ENCODE measurements at regions of chr4 and their contacts with region 1.

Region 1: GRCh38 chr4:37603070-37603468 is 83.1 kb downstream of the RELL1 start:
- DNase-seq: peak; percentile 56 to 87 (median 72)
- ATAC-seq: peak; percentile 74
- H3K4me3 ChIP-seq: no peak overlapping the region
- H3K4me3 Mint-ChIP-seq: no peak overlapping the region
- H3K27ac ChIP-seq: no peak overlapping the region
- H3K27ac Mint-ChIP-seq: no peak overlapping the region
- H3K4me1 ChIP-seq: peaks cover 8% of the 10 kb centered on the region
- H3K4me1 Mint-ChIP-seq: peaks cover 5% of the 10 kb centered on the region
- H3K27me3 ChIP-seq: no peaks in the 10 kb centered on the region
- H3K27me3 Mint-ChIP-seq: no peaks in the 10 kb centered on the region
- CTCF ChIP-seq: peak; percentile 98

Region 2: GRCh38 chr4:37615059-37615719 is 12.1 kb after region 1 on chr4:
- CTCF ChIA-PET with region 1: interaction called, 10 read pairs
- POLR2A ChIA-PET with region 1: no interaction called
- intact Hi-C with region 1: no loop called
- DNase-seq: no peak
- ATAC-seq: no peak
- H3K4me3 ChIP-seq: no peak overlapping the region
- H3K4me3 Mint-ChIP-seq: no peak overlapping the region
- H3K27ac ChIP-seq: no peak overlapping the region
- H3K27ac Mint-ChIP-seq: no peak overlapping the region
- H3K4me1 ChIP-seq: no peaks in the 10 kb centered on the region
- H3K4me1 Mint-ChIP-seq: peaks cover 6% of the 10 kb centered on the region
- H3K27me3 ChIP-seq: no peaks in the 10 kb centered on the region
- H3K27me3 Mint-ChIP-seq: no peaks in the 10 kb centered on the region
- CTCF ChIP-seq: no peak

Region 3: DNA sequence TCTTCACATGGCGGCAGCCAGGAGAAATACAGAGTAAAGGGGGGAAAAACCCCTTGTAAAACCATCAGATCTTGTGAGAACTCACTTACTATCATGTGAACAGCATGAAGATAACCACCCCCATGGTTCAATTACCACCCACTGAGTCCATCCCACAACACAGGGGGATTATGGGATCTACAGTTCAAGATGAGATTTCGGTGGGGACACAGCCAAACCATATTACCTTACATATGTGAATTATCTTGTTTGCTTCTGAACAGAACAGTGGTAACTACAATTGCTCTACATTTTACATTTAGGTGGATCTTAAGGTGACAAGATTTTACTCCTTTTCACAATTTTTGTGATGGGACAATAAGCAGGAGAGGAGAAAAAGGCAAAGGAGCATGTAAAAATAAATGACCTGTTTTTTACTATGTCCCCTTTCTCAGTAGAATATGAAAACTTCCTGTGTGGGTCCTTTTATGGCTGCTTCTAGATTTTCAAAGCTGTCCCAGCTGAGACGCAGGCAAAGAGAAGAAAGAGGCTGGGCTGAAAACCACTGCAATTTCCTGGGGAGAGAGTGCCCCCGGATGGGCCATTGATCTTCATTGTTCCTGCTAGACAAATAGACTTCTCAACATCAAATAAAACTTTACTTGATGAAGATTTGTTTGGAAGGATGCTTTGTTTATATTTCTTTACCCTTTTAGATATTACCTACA is 177.5 kb after region 1 on chr4:
- CTCF ChIA-PET with region 1: interaction called, 104 read pairs
- POLR2A ChIA-PET with region 1: no interaction called
- intact Hi-C with region 1: loop called (anchors 1 kb)
- DNase-seq: peak; percentile 36 to 85 (median 61)
- ATAC-seq: peak; percentile 96
- H3K4me3 ChIP-seq: no peak overlapping the region
- H3K4me3 Mint-ChIP-seq: peak overlapping the region; percentile 13
- H3K27ac ChIP-seq: peak overlapping the region; percentile 18 to 47
- H3K27ac Mint-ChIP-seq: peak overlapping the region; percentile 91
- H3K4me1 ChIP-seq: peaks cover 25% of the 10 kb centered on the region
- H3K4me1 Mint-ChIP-seq: peaks cover 28% of the 10 kb centered on the region
- H3K27me3 ChIP-seq: no peaks in the 10 kb centered on the region
- H3K27me3 Mint-ChIP-seq: no peaks in the 10 kb centered on the region
- CTCF ChIP-seq: no peak

Region 4: DNA sequence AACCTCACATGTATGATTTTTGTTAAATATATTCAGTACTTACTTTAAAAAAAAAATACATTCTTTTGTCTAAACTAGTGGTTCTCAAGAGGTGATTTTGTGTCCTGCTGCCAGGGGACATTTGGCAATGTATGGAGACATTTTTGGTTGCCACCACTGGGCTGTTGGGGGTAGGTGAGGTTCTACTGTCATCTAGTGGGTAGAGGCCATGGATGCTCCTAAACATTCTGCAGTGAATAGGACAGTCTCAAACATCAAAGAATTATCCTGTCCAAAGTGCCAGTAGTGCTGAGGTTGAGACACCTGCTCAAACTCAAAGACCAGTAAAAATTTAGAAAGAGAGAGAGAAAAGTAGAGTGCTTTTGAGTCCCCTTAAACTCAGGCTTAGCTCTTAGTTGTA is 190.5 kb after region 1 on chr4:
- CTCF ChIA-PET with region 1: interaction called, 24 read pairs
- POLR2A ChIA-PET with region 1: no interaction called
- intact Hi-C with region 1: loop called (anchors 1 kb)
- DNase-seq: peak in 4 of 9 experiments; percentile 18 to 61 (median 34)
- ATAC-seq: peak; percentile 66
- H3K4me3 ChIP-seq: no peak overlapping the region
- H3K4me3 Mint-ChIP-seq: no peak overlapping the region
- H3K27ac ChIP-seq: no peak overlapping the region
- H3K27ac Mint-ChIP-seq: no peak overlapping the region
- H3K4me1 ChIP-seq: no peaks in the 10 kb centered on the region
- H3K4me1 Mint-ChIP-seq: no peaks in the 10 kb centered on the region
- H3K27me3 ChIP-seq: no peaks in the 10 kb centered on the region
- H3K27me3 Mint-ChIP-seq: no peaks in the 10 kb centered on the region
- CTCF ChIP-seq: peak; percentile 65

Region 5: GRCh38 chr4:37891260-37892159 is 288.4 kb after region 1 on chr4:
- CTCF ChIA-PET with region 1: no interaction called
- POLR2A ChIA-PET with region 1: no interaction called
- intact Hi-C with region 1: loop called (anchors 10 kb)
- DNase-seq: peak; percentile 16 to 82 (median 51)
- ATAC-seq: peak; percentile 60
- H3K4me3 ChIP-seq: peak overlapping the region; percentile 60 to 80
- H3K4me3 Mint-ChIP-seq: peak overlapping the region; percentile 97
- H3K27ac ChIP-seq: peak overlapping the region; percentile 56 to 61
- H3K27ac Mint-ChIP-seq: peak overlapping the region; percentile 97
- H3K4me1 ChIP-seq: peaks cover 30% of the 10 kb centered on the region
- H3K4me1 Mint-ChIP-seq: peaks cover 44% of the 10 kb centered on the region
- H3K27me3 ChIP-seq: no peaks in the 10 kb centered on the region
- H3K27me3 Mint-ChIP-seq: no peaks in the 10 kb centered on the region
- CTCF ChIP-seq: no peak

Region 6: GRCh38 chr4:38034986-38035882 is 432.2 kb after region 1 on chr4:
- CTCF ChIA-PET with region 1: interaction called, 10 read pairs
- POLR2A ChIA-PET with region 1: interaction called, 4 read pairs
- intact Hi-C with region 1: loop called (anchors 1 kb)
- DNase-seq: peak in 4 of 9 experiments; percentile 22 to 74 (median 60)
- ATAC-seq: peak; percentile 65
- H3K4me3 ChIP-seq: no peak overlapping the region
- H3K4me3 Mint-ChIP-seq: no peak overlapping the region
- H3K27ac ChIP-seq: no peak overlapping the region
- H3K27ac Mint-ChIP-seq: no peak overlapping the region
- H3K4me1 ChIP-seq: no peaks in the 10 kb centered on the region
- H3K4me1 Mint-ChIP-seq: no peaks in the 10 kb centered on the region
- H3K27me3 ChIP-seq: no peaks in the 10 kb centered on the region
- H3K27me3 Mint-ChIP-seq: no peaks in the 10 kb centered on the region
- CTCF ChIP-seq: peak; percentile 89

Measured in CD8-positive, alpha-beta T cell (primary cell).